IMR-90 (cell line): ENCODE measurements at regions of chr2 and their contacts with region 1.

Region 1: DNA sequence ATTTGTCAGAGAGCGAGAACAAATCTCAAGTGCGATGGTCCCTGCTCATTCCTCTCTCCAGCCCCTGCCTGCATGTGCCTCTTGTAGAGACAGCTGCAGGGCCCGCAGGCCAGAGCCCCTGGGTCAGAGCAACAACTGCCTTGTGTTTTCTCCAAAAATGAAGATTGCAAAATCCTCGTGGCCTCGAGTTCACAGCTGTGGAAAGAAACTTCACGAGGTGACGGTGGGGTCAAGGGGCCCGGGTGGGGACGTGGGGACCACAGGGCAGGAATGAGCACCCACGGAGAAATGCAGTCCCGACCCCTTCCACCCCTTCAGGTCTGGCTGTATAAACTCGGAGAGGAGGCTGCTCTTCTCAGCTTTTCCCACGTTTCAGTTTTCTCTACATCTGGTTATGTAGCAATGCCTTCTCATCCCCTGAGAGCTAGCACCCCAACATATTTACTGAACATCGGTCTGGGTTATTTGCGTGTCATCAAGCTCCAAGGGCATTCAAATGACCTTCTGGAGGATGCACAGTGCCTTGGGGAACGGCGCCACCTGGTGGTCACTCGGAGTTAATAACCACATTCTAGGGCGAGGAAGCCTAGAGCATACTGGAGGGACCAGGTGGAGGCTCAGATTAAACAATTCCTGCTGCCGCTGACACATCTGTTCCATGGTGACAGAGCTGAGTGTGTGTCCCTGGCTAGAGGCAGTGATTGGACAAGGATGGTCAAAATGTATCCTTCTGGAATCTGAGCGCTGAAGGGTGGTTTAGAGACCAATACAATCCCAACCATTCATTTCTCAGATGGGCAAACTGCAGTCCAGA is 91.4 kb upstream of the CYRIA start:
- DNase-seq: peak; percentile 63
- ATAC-seq: peak; percentile 98
- H3K4me3 ChIP-seq: no peak overlapping the region
- H3K27ac ChIP-seq: no peak overlapping the region
- H3K4me1 ChIP-seq: no peaks in the 10 kb centered on the region
- H3K27me3 ChIP-seq: peaks cover 7% of the 10 kb centered on the region; the same call in 1 of the 2 replicates
- CTCF ChIP-seq: peak; percentile 88
- POLR2A ChIP-seq: no peak
- RAD21 ChIP-seq: peak; percentile 97

Region 2: GRCh38 chr2:15636972-15637785 is 1119.9 kb before region 1 on chr2:
- CTCF ChIA-PET with region 1: no interaction called
- POLR2A ChIA-PET with region 1: no interaction called
- dilution Hi-C with region 1: no loop called
- in situ Hi-C with region 1: loop called (anchors 10 kb)
- intact Hi-C with region 1: loop called (anchors 1 kb)
- DNase-seq: peak; percentile 68
- ATAC-seq: peak; percentile 88
- H3K4me3 ChIP-seq: no peak overlapping the region
- H3K27ac ChIP-seq: no peak overlapping the region
- H3K4me1 ChIP-seq: peaks cover 2% of the 10 kb centered on the region; the same call in 1 of the 2 replicates
- H3K27me3 ChIP-seq: no peaks in the 10 kb centered on the region
- CTCF ChIP-seq: peak; percentile 97
- POLR2A ChIP-seq: 0 out of 2 replicates have a peak, but pooled peaks have one; percentile 20
- RAD21 ChIP-seq: peak; percentile 94

Region 3: DNA sequence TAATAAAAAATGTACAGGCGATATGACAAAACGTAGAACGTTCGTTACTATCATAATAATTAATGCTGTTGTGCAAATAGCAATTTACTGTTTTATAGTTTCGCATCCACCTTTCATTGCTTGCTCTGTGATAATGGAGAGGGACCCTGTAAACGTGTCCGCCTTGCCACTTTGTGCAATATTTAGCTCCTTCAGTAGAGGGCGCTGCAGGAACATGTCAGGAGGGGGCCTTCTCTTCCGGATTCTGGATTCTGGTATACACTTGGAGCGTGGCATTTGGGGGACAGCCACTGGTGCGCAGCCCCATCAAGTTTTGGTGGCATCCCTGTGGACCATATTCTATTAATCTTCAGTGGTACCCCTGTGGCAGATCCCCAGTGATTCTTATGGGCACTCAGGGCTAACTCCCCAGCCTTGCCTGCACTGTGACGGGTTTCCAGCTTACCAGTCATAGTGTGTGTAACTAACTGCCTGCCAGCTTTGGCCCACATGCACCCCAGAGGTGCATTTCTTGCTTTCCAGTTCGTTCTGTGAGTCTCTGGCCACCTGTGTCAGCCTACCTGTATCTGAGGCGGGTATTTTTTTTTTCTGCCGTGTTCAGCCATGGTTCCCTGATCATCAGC is 231.7 kb before region 1 on chr2:
- CTCF ChIA-PET with region 1: no interaction called
- POLR2A ChIA-PET with region 1: no interaction called
- dilution Hi-C with region 1: no loop called
- in situ Hi-C with region 1: no loop called
- intact Hi-C with region 1: loop called (anchors 1 kb)
- DNase-seq: no peak
- ATAC-seq: no peak
- H3K4me3 ChIP-seq: no peak overlapping the region
- H3K27ac ChIP-seq: no peak overlapping the region
- H3K4me1 ChIP-seq: no peaks in the 10 kb centered on the region
- H3K27me3 ChIP-seq: no peaks in the 10 kb centered on the region
- CTCF ChIP-seq: peak; percentile 43
- POLR2A ChIP-seq: no peak
- RAD21 ChIP-seq: peak; percentile 47

Region 4: GRCh38 chr2:16591370-16591933 is 165.6 kb before region 1 on chr2:
- CTCF ChIA-PET with region 1: no interaction called
- POLR2A ChIA-PET with region 1: no interaction called
- dilution Hi-C with region 1: no loop called
- in situ Hi-C with region 1: no loop called
- intact Hi-C with region 1: no loop called
- DNase-seq: no peak
- ATAC-seq: no peak
- H3K4me3 ChIP-seq: no peak overlapping the region
- H3K27ac ChIP-seq: no peak overlapping the region
- H3K4me1 ChIP-seq: no peaks in the 10 kb centered on the region
- H3K27me3 ChIP-seq: no peaks in the 10 kb centered on the region
- CTCF ChIP-seq: no peak
- POLR2A ChIP-seq: no peak
- RAD21 ChIP-seq: no peak

Region 5: DNA sequence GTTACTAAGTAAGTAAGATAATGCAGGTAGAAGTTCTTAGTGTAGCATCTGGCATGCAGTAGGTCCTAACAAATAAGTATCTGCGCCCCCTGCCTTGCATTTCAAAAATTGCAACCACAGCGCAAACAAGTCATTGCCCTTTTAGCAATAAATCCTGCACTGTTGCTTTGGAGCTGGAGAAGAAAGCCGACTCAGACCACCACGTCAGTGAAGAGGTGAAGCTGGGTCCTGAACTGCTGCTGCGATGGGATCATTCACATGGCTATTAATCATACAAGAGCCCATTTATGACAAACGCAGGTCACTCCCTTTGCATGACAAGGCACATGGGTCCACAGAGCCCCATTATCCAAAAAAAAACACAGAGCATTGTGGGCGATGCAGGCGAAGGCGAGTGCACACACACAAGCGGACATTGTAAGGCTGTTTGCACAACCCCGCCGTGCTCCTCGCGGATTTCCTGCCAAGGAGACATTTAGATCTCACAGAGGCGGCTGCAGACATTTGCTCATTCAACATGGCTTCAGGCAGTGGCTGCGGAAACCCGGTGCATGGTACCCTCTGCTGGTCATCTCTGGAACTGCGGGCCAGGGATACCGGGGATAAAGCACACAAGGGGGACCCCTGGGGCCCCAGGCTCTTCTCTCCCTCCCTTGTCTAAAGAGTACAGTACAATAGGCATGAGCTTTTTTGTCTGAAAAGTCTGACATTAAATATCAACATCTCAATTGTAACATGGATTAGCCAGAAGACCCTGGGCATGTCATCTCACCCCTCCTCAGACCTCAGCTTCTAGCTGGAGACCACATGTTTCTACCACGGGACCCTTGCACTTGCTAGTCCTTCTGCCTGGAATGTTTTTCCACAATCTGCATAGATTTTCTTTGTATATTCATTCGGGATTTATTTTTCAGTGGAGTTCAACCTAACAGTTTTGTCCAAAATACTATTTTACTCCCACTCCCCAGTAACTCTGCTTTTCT is 148.1 kb before region 1 on chr2:
- CTCF ChIA-PET with region 1: interaction called, 9 read pairs
- POLR2A ChIA-PET with region 1: no interaction called
- dilution Hi-C with region 1: no loop called
- in situ Hi-C with region 1: no loop called
- intact Hi-C with region 1: loop called (anchors 1 kb)
- DNase-seq: peak; percentile 68
- ATAC-seq: peak; percentile 96
- H3K4me3 ChIP-seq: peak overlapping the region; percentile 20
- H3K27ac ChIP-seq: no peak overlapping the region
- H3K4me1 ChIP-seq: no peaks in the 10 kb centered on the region; the same call in 1 of the 2 replicates
- H3K27me3 ChIP-seq: no peaks in the 10 kb centered on the region
- CTCF ChIP-seq: peak; percentile 92
- POLR2A ChIP-seq: no peak
- RAD21 ChIP-seq: peak; percentile 74

Region 6: DNA sequence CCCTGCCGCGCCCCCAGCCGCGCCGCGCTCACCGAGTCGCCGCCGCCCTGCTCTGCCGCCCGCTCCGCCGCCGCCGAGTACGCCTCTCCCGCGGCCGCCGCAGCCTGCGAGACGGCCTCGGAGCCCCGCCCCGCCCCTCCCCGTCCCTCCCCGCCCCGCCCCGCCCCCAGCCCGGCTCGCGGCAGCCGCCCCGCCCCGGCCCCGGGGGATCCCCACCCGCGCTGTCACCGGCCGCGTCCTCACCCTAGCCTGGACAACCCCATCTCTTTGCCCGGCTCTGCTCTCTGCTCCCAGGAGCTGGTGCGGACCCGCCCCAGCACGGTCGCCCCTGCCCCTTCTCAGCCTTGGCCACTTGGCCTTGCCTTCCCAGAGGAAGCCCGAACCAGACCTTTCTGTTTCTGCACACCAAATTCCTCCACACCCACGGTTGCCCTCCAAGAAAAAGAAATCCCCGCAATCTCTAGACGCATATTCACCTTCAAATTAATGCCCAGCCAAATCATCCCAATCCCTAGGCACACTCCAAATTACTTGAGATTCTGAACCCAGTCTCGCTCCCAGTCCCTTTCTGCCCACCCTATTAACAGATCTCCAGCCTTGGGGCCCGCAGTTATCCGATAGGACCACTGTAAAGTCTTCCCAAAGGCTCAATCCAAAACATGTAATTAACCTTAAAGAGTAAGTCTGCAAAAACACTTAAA is 91.1 kb before region 1 on chr2 and contains the start of gene CYRIA:
- CTCF ChIA-PET with region 1: no interaction called
- POLR2A ChIA-PET with region 1: no interaction called
- dilution Hi-C with region 1: no loop called
- in situ Hi-C with region 1: no loop called
- intact Hi-C with region 1: loop called (anchors 5 kb)
- DNase-seq: no peak
- ATAC-seq: peak; percentile 77
- H3K4me3 ChIP-seq: peak within 1 kb of the TSS; percentile 74
- H3K27ac ChIP-seq: peak within 1 kb of the TSS; percentile 4; the same call in 1 of the 2 replicates
- H3K4me1 ChIP-seq: peaks cover 20% of the 10 kb centered on the region; the same call in 1 of the 2 replicates
- H3K27me3 ChIP-seq: peaks cover 19% of the 10 kb centered on the region; the same call in 1 of the 2 replicates
- CTCF ChIP-seq: no peak
- POLR2A ChIP-seq: no peak
- RAD21 ChIP-seq: no peak
- total RNA-seq, gene CYRIA: 1.7 and 3.8 TPM in 2 replicates

Region 7: GRCh38 chr2:16709769-16710168 is 47.3 kb before region 1 on chr2:
- CTCF ChIA-PET with region 1: no interaction called
- POLR2A ChIA-PET with region 1: no interaction called
- dilution Hi-C with region 1: no loop called
- in situ Hi-C with region 1: no loop called
- intact Hi-C with region 1: no loop called
- DNase-seq: no peak
- ATAC-seq: no peak
- H3K4me3 ChIP-seq: no peak overlapping the region
- H3K27ac ChIP-seq: no peak overlapping the region
- H3K4me1 ChIP-seq: no peaks in the 10 kb centered on the region
- H3K27me3 ChIP-seq: no peaks in the 10 kb centered on the region
- CTCF ChIP-seq: no peak
- POLR2A ChIP-seq: no peak
- RAD21 ChIP-seq: no peak